Left ventricle myocardium inferior (tissue), 1 donor: ENCODE measurements at regions of chr18 and their contacts with region 1.

Region 1: GRCh38 chr18:9147440-9148202 is 11.0 kb downstream of the ANKRD12 start:
- DNase-seq: no peak
- H3K4me3 ChIP-seq: no peak overlapping the region
- H3K27ac ChIP-seq: peak overlapping the region; percentile 30
- H3K4me1 ChIP-seq: peaks cover 94% of the 10 kb centered on the region
- H3K27me3 ChIP-seq: no peaks in the 10 kb centered on the region
- CTCF ChIP-seq: peak; percentile 84

Region 2: GRCh38 chr18:9070212-9070611 is 77.4 kb before region 1 on chr18:
- intact Hi-C with region 1: loop called (anchors 5 kb)
- DNase-seq: no peak
- H3K4me3 ChIP-seq: no peak overlapping the region
- H3K27ac ChIP-seq: no peak overlapping the region
- H3K4me1 ChIP-seq: peaks cover 6% of the 10 kb centered on the region
- H3K27me3 ChIP-seq: no peaks in the 10 kb centered on the region
- CTCF ChIP-seq: no peak

Region 3: DNA sequence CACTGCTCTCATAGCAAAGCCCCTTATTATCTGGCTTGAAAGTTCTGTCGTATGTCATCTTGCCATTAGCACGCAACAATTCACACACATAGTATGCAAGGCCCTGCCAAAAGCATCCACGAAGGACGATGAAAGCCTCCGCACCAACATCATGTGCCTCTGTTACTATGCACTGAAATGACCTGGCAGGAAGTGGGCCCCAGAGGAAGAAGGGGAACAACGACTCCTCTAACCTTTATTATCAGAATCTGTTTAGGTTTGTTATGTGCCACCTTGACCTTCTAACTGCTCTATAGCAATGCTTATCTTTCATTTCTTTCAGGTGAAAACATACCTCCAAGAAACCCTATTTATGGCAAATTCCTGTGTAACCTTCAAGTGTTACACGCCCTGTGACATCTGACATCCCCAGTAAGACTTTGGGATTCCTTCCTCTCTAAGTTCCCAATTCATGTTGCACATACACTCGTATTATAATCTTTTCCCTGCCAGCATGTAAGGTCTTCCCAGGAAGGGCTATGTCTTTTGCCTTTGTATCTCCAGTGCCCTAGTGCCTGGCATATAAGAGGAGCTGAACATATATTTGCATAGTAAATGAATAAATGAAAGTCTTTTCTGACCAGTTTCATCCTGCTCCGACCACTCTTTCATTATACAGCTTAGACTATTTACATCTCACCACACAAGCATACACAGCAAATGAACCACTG is 52.2 kb before region 1 on chr18:
- intact Hi-C with region 1: no loop called
- DNase-seq: no peak
- H3K4me3 ChIP-seq: no peak overlapping the region
- H3K27ac ChIP-seq: no peak overlapping the region
- H3K4me1 ChIP-seq: peaks cover 14% of the 10 kb centered on the region
- H3K27me3 ChIP-seq: no peaks in the 10 kb centered on the region
- CTCF ChIP-seq: no peak

Region 4: DNA sequence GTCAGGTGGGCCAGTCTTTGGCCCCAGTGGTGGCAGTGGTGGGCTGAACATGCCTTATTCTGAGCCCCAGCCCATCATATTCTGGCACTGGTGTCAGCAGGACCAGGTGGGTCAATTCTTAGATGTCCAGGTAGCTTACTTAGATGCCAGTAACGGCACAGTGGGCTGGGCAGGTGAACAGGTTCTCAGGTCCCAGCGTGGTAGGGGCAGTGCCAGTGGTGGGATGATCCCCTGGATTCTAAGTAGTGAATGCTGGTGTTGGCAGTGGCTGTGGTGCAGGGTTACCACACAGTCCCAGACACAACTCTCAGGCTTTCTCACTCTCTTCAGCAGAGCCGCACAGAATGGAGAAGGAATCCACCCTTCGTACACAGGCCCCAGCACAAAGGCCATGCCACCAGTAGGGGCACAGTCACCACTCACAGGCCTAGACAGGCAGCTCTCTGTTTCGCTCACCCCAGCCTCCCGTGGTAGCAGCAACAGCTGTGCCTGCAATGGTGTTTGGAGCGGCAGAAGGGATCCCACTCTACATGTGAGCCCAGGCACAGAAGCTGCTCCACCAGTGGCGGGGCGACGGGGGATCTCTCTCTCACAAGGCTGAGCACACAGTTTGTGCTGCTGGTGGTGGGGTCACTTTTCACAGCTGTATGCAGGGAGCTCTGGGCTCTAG is 86.3 kb after region 1 on chr18:
- intact Hi-C with region 1: no loop called
- DNase-seq: no peak
- H3K4me3 ChIP-seq: no peak overlapping the region
- H3K27ac ChIP-seq: no peak overlapping the region
- H3K4me1 ChIP-seq: no peaks in the 10 kb centered on the region
- H3K27me3 ChIP-seq: no peaks in the 10 kb centered on the region
- CTCF ChIP-seq: no peak